BJ (cell line): ENCODE measurements at regions of chr5 and their contacts with region 1.

Region 1: GRCh38 chr5:167582283-167582682 is 709.2 kb upstream of the WWC1 start:
- DNase-seq: no peak
- H3K4me3 ChIP-seq: no peak overlapping the region
- H3K27me3 ChIP-seq: no peaks in the 10 kb centered on the region
- CTCF ChIP-seq: peak; percentile 11; the same call in 1 of the 2 replicates

Region 2: GRCh38 chr5:167485061-167485774 is 97.1 kb before region 1 on chr5:
- CTCF ChIA-PET with region 1: no interaction called
- POLR2A ChIA-PET with region 1: interaction called, 10 read pairs
- DNase-seq: no peak
- H3K4me3 ChIP-seq: no peak overlapping the region
- H3K27me3 ChIP-seq: no peaks in the 10 kb centered on the region
- CTCF ChIP-seq: no peak

Region 3: DNA sequence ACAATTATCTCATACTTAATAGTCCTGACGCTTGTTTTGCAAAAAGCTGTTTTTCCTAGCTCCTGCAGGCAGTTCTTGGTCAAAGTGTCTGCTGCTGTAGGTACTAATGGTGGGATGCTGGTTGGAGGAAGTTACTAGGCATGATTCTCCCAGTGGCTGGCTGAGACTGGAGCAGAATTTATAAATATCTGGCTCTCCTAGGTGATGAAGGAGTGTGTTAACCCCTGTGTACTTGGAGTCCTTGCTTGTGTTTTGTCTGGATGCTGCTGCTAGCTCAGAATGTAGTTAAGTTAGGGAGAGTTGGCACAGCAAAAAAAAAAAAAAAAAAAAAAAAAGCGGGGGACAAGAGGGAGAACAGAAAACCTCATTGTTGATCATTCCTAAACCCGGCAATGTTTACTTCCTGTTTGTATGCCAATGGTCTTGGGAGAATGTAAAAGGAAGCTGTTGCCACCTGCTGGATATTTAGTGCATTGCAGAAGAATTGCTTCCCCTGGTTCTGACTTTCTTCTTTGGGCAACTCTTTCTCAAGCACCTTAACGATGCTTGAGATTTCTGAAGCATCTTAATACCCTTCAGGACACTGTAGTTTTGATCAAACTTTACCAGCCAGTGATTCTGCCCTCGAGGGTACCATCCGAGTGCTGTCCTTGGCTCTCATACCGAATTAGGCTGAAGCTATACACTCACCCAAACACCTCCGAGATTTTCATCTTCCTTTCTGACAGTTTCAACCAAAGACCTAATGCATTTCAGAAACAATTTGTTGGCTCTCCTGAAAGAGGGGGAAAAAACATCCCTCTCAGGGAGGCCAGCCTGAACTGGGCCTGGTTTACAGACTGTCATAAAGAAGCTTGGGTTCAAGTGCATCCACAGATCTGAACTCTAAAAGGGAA is 637.5 kb after region 1 on chr5:
- CTCF ChIA-PET with region 1: interaction called, 16 read pairs
- POLR2A ChIA-PET with region 1: interaction called, 3 read pairs
- DNase-seq: peak; percentile 12
- H3K4me3 ChIP-seq: no peak overlapping the region
- H3K27me3 ChIP-seq: peaks cover 4% of the 10 kb centered on the region
- CTCF ChIP-seq: peak; percentile 87